GM12878 (cell line): ENCODE measurements at regions of chr4 and their contacts with region 1.

Region 1: DNA sequence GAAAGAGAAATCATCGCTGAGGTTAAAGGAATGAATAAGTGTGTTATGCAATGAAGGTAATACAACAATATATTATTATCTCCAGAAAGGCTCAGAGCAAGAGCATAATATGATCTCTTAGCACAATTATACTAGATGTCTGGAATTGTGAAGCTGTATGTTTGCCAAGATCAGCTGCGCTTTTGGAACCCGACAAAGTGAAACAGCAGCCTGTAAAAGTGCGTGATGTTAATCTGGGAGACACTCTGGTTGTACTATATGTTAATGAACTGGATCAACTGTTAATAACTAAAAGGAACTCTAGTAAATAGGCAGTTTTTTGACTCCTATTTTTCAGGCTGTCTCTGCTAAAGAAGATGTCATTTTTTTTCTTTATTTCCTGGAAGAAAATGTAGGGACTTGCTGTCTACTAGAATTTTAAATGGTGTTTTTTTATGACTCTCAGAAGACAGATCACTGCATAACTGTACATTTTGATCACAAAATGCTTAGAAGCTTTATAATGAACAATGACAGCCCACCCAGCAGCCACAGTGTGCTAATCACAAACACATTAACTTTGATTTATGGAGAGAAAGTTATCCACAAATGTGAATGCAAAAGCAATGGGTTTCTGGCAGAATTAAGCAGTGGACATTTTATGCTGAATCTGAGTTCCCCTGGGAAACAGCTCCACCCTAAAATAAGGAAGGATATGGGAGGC is 50.2 kb downstream of the UGT2B28 start:
- DNase-seq: no peak
- ATAC-seq: no peak
- H3K4me3 ChIP-seq: no peak overlapping the region
- H3K27ac ChIP-seq: no peak overlapping the region
- H3K4me1 ChIP-seq: no peaks in the 10 kb centered on the region
- H3K27me3 ChIP-seq: no peaks in the 10 kb centered on the region
- CTCF ChIP-seq: no peak
- EP300 ChIP-seq: no peak
- POLR2A ChIP-seq: no peak
- RAD21 ChIP-seq: no peak

Region 2: GRCh38 chr4:69167300-69167699 is 163.2 kb before region 1 on chr4:
- CTCF ChIA-PET with region 1: no interaction called
- POLR2A ChIA-PET with region 1: no interaction called
- RAD21 ChIA-PET with region 1: no interaction called
- SMC1A ChIA-PET with region 1: no interaction called
- in situ Hi-C with region 1: loop called (anchors 5 kb)
- intact Hi-C with region 1: no loop called
- DNase-seq: no peak
- ATAC-seq: no peak
- H3K4me3 ChIP-seq: no peak overlapping the region
- H3K27ac ChIP-seq: no peak overlapping the region
- H3K4me1 ChIP-seq: no peaks in the 10 kb centered on the region
- H3K27me3 ChIP-seq: no peaks in the 10 kb centered on the region
- CTCF ChIP-seq: no peak
- EP300 ChIP-seq: no peak
- POLR2A ChIP-seq: no peak
- RAD21 ChIP-seq: no peak